Tibial artery (tissue), 4 donors: ENCODE measurements at regions of chr9 and their contacts with region 1.

Region 1: GRCh38 chr9:93444301-93444700 is 7.2 kb upstream of the FAM120A start:
- DNase-seq: no peak
- H3K4me3 ChIP-seq: no peak overlapping the region
- H3K27ac ChIP-seq: no peak overlapping the region
- H3K4me1 ChIP-seq: peaks cover 0 to 1% (median 0%) of the 10 kb centered on the region in 4 donors
- H3K27me3 ChIP-seq: no peaks in the 10 kb centered on the region
- CTCF ChIP-seq: no peak

Region 2: GRCh38 chr9:93387791-93388190 is 56.5 kb before region 1 on chr9:
- intact Hi-C with region 1: no loop called
- DNase-seq: no peak
- H3K4me3 ChIP-seq: no peak overlapping the region
- H3K27ac ChIP-seq: no peak overlapping the region
- H3K4me1 ChIP-seq: no peaks in the 10 kb centered on the region
- H3K27me3 ChIP-seq: peaks cover 0 to 3% of the 10 kb centered on the region in 2 donors
- CTCF ChIP-seq: no peak

Region 3: DNA sequence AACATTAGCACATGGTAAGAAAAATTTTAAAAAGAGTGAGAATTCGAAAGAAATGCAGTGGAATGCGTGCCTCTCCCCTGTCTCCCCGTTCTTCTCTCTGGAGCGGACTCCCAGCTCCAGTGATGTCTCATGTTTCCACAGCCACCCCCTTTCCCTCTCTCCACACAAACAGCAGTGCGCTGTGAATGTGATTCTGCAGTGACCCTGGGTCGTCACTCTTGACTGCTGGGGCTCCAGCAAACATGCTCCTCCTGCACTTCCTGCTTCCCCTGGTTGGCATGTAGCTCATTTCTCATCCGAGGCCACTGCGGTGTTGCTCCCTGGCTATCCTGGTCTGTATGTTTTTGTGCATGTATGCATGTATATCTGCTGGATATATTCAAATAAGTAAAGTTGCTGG is 145.4 kb after region 1 on chr9:
- intact Hi-C with region 1: loop called (anchors 10 kb)
- DNase-seq: peak in 1 of 2 donors; percentile 31
- H3K4me3 ChIP-seq: no peak overlapping the region
- H3K27ac ChIP-seq: no peak overlapping the region
- H3K4me1 ChIP-seq: peaks cover 0 to 82% (median 48%) of the 10 kb centered on the region in 4 donors
- H3K27me3 ChIP-seq: no peaks in the 10 kb centered on the region
- CTCF ChIP-seq: no peak